ENCODE measurements at regions of chr1 and their contacts with region 1.

Region 1: DNA sequence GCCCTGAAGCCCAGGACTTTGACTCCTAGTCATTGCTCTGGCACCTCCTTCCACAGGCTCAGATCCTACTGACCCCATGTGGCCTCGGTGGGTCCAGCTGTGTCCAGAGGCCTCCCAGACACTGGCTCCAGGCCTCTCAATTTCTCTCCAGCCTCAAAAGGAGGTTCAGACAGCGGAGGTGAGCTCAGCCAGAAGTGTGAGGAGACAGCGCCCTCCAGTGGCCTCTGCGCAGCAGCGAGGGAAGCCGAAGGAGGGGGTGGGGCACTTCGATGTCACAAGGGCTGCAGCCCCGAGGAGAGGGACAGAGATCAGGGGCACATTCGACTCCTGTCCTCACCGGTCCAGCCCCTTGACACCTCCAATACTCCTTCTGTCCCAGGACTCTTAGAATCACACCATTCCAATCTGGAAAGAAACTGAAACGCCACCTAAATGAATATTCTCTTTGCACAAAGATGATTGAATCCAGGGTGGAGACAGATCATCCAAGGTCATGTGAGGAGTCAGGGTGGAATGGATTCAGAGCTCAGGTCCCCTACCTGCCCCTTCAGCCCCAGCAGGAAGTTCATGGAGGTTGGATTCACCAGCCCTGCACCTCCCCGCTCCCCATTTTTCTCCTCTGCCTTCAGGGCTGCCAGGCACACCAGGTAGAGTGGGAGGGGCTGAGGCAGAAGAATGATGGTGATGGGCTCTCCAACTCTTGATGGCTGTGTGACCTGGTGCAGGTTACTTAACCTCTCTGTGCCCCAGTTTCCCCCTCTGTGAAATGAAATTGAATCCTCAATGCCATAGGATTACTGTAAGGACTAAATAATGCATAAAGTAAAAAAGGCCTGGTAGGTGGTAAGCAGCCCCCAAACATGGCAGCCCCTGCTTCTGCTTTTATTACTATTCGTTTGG is 34.8 kb upstream of the ZBTB40 start:
- DNase-seq: peak; percentile 50 to 83 (median 69)
- ATAC-seq: peak; percentile 21 to 60 (median 59)
- H3K4me3 ChIP-seq: no peak overlapping the region
- H3K27ac ChIP-seq: no peak overlapping the region
- H3K4me1 ChIP-seq: peaks cover 0 to 23% (median 7%) of the 10 kb centered on the region in 12 donors
- H3K27me3 ChIP-seq: peaks cover 0 to 30% (median 0%) of the 10 kb centered on the region in 9 donors
- CTCF ChIP-seq: peak; percentile 68 to 83 (median 74)
- POLR2A ChIP-seq: no peak

Region 2: GRCh38 chr1:21669258-21670058 is 747.3 kb before region 1 on chr1 and contains the start of gene RAP1GAP:
- intact Hi-C with region 1: loop called in 1 of 10 experiments (anchors 10 kb)
- DNase-seq: no peak
- ATAC-seq: peak in 1 of 4 donors; percentile 13
- H3K4me3 ChIP-seq: peak within 1 kb of the TSS; percentile 5 to 51 (median 42)
- H3K27ac ChIP-seq: no peak within 1 kb of the TSS
- H3K4me1 ChIP-seq: peaks cover 6 to 80% (median 43%) of the 10 kb centered on the region in 12 donors
- H3K27me3 ChIP-seq: peaks cover 0 to 48% (median 22%) of the 10 kb centered on the region in 9 donors
- CTCF ChIP-seq: no peak
- POLR2A ChIP-seq: no peak
- total RNA-seq, gene RAP1GAP: 3.1 to 8.0 (median 3.8) TPM

Region 3: DNA sequence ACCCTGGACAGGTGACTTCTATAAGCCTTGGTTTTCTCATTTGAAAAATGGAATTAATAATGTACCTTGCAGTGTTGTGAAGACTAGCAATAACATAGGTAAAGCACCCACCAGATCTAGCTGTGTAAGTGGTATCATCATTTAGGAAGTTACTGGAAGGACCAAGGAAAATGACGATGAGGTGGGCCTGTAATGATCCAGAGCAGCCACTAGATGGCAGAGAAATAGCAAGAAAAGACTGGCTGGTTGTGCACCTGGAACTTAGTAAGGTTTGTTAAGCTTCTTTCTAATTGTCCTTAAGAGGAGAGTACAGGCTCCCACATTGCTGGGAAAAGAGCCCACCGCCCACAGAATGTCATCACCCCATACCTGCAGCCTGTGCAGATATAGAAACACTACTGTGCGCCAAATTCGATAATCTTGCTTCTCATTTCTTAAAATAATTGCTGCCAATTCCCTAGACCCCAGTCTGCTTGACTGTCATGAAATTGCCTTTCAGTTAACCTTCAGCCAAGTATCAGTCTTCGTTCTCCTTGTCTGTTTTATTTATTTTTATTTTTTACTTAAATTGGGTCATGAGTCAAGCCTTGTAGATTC is 311.1 kb before region 1 on chr1:
- intact Hi-C with region 1: loop called (anchors 5 to 10 kb)
- DNase-seq: no peak
- ATAC-seq: peak in 3 of 4 donors; percentile 41 to 45 (median 42)
- H3K4me3 ChIP-seq: no peak overlapping the region
- H3K27ac ChIP-seq: no peak overlapping the region
- H3K4me1 ChIP-seq: peaks cover 0 to 39% (median 16%) of the 10 kb centered on the region in 12 donors
- H3K27me3 ChIP-seq: no peaks in the 10 kb centered on the region
- CTCF ChIP-seq: peak; percentile 66 to 83 (median 78)
- POLR2A ChIP-seq: no peak

Region 4: GRCh38 chr1:22131875-22132486 is 284.8 kb before region 1 on chr1:
- intact Hi-C with region 1: loop called in 1 of 10 experiments (anchors 10 kb)
- DNase-seq: no peak
- ATAC-seq: peak in 2 of 4 donors; percentile 34 to 53
- H3K4me3 ChIP-seq: no peak overlapping the region
- H3K27ac ChIP-seq: no peak overlapping the region
- H3K4me1 ChIP-seq: peaks cover 0 to 4% (median 0%) of the 10 kb centered on the region in 12 donors
- H3K27me3 ChIP-seq: peaks cover 0 to 33% (median 1%) of the 10 kb centered on the region in 9 donors
- CTCF ChIP-seq: peak; percentile 35 to 69 (median 62)
- POLR2A ChIP-seq: no peak

Region 5: DNA sequence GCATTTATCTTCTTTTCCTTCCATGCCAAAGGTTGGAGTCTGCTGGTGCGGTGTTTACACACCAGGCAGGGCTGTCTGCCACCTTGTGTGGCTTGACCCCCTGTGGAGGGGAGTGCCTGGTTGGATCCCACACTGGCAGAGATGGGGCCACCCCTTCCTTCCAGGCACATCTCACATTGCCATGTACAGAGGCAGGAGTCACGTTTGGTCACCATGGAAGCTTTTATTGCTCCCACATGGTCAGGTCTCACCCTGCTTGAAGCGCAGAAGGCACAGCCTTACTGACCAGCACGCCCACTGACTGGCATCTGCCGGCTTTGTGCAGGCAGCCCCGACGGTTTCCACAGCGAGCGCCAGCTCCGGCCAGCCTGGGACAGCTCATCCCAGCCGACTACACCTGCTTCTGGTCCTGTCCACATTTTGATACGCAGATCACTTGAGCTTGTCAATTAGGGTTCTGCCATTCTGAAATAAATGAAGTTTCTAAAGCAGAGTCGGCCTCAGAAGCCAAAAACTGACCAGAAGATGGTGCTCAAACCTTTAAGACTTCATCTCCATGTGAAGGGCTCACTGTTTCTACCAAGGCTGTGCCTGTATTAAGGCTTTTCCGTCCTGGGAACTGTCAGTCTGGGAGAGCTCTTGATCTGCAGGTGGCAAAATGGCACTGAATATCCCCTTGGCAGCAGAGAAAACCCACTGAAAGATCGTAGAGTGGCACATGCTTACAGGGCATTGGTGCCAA is 110.9 kb after region 1 on chr1:
- intact Hi-C with region 1: loop called in 2 of 10 experiments (anchors 5 to 10 kb)
- DNase-seq: no peak
- ATAC-seq: no peak
- H3K4me3 ChIP-seq: no peak overlapping the region
- H3K27ac ChIP-seq: no peak overlapping the region
- H3K4me1 ChIP-seq: peaks cover 0 to 29% (median 16%) of the 10 kb centered on the region in 12 donors
- H3K27me3 ChIP-seq: no peaks in the 10 kb centered on the region
- CTCF ChIP-seq: peak in 5 of 12 donors; percentile 7 to 27 (median 19)
- POLR2A ChIP-seq: no peak